OCI-LY7 (cell line): ENCODE measurements at regions of chr9 and their contacts with region 1.

Region 1: GRCh38 chr9:110152704-110153374 is 55.1 kb downstream of the C9orf152 start:
- DNase-seq: peak; percentile 80
- H3K4me3 ChIP-seq: peak overlapping the region; percentile 79
- H3K27ac ChIP-seq: peak overlapping the region; percentile 97
- H3K4me1 ChIP-seq: peaks cover 85% of the 10 kb centered on the region
- CTCF ChIP-seq: peak; percentile 94

Region 2: GRCh38 chr9:109846776-109847175 is 306.1 kb before region 1 on chr9:
- CTCF ChIA-PET with region 1: no interaction called
- POLR2A ChIA-PET with region 1: no interaction called
- intact Hi-C with region 1: no loop called
- DNase-seq: no peak
- H3K4me3 ChIP-seq: no peak overlapping the region
- H3K27ac ChIP-seq: no peak overlapping the region
- H3K4me1 ChIP-seq: no peaks in the 10 kb centered on the region
- CTCF ChIP-seq: no peak

Region 3: GRCh38 chr9:109918339-109919163 is 234.3 kb before region 1 on chr9:
- CTCF ChIA-PET with region 1: interaction called, 4 read pairs
- POLR2A ChIA-PET with region 1: interaction called, 215 read pairs
- intact Hi-C with region 1: loop called (anchors 1 kb)
- DNase-seq: peak; percentile 96
- H3K4me3 ChIP-seq: peak overlapping the region; percentile 49
- H3K27ac ChIP-seq: peak overlapping the region; percentile 98
- H3K4me1 ChIP-seq: peaks cover 97% of the 10 kb centered on the region
- CTCF ChIP-seq: no peak

Region 4: DNA sequence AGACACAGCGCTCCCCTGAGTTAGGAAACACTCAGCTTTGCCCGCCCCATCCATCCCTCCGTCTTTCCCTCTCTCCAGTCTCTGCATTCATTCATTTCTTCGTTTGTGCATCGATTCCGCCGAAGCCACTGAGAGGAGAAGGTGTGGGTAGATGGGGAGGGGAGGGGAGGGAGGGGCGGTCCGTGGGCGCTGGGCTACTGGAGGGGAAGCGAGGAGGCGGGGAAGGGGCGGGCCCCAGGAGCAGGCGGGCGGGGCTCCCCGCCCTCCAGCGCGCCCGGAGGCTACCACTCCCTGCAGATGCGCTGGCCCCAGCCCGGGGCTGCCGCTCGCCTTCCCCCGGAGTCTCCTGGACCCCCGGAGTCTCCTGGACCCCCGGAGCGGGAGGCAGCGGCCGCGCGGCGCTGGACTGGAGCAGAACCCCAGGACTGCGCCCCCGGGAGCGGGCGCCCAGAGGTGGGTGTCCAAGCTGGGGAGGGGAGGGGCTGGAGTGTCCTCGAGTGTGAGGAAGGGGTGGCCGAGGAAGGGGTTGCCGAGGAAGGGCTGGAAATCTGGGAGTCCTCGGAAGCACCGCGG is 104.3 kb before region 1 on chr9:
- CTCF ChIA-PET with region 1: no interaction called
- POLR2A ChIA-PET with region 1: interaction called, 21 read pairs
- intact Hi-C with region 1: loop called (anchors 1 kb)
- DNase-seq: peak; percentile 88
- H3K4me3 ChIP-seq: peak overlapping the region; percentile 86
- H3K27ac ChIP-seq: peak overlapping the region; percentile 53
- H3K4me1 ChIP-seq: peaks cover 47% of the 10 kb centered on the region
- CTCF ChIP-seq: no peak

Region 5: DNA sequence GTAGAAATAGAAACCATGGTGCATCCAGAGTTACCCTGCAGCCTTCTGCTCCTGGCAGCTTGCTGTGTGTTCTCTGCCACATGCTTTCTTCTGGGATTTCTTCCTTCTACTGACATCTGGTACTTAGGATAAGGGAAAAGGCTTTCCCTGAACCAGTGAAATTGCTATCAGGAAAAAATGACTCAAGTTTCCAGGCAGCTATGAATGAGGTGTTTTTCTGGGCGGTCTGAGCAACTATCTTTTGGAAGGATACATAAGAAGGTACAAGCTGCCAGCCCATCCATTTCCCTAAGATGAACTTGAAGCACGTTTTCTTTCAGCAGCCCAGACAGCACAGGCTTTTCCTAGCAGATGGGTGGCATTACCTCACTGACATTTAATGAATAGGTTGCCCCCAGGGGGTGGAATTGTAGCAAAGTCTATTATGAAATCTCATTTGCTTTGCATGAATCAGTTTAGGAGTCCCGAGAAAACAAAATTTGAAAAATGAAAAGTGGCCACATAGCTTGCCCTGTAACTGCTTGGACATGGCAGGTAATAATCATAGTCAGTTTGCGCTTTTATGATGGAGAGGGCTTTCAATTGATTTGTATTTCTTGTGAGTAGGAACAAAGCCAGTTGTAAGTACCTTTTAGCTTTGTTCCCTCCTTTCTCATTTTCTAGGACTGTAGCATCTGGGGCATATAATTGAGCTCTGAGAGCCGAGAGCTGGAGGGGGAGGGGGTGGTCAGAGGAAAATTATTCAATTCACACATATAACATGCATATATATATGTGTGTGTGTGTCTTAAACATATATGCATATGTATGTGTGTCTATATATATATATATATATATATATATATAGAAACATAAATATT is 53.4 kb before region 1 on chr9:
- CTCF ChIA-PET with region 1: interaction called, 9 read pairs
- POLR2A ChIA-PET with region 1: interaction called, 31 read pairs
- intact Hi-C with region 1: loop called (anchors 2 kb)
- DNase-seq: peak; percentile 47
- H3K4me3 ChIP-seq: peak overlapping the region; percentile 4
- H3K27ac ChIP-seq: peak overlapping the region; percentile 79
- H3K4me1 ChIP-seq: peaks cover 67% of the 10 kb centered on the region
- CTCF ChIP-seq: peak; percentile 47

Region 6: DNA sequence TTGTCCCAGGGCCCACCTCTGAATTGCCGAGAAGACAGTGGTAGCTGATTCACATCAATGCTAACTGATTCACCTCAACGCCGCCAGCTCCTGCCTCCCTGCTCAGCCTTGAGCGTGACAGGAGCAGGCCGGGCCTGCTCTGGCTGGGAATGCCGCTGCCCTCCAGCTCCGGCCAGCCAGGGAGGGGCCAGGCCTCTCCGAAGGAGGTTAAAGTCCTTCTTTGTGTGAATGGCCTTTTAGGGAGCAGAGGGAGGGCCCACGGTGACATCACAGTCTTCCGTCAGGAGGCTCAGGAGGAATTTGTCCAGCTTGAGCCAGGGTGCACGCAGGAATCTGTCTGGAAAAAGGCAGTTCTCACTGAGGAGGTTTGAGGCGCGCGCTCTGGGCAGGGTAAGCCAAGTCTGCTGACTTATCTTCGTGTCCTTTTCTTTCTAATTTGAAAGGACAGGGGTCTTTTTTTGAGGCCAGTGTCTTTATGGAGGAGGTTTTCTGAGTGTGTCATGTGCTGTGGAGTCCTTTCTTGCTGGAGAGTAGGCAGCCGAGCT is 27.6 kb before region 1 on chr9:
- CTCF ChIA-PET with region 1: interaction called, 5 read pairs
- POLR2A ChIA-PET with region 1: interaction called, 133 read pairs
- intact Hi-C with region 1: no loop called
- DNase-seq: no peak
- H3K4me3 ChIP-seq: peak overlapping the region; percentile 57
- H3K27ac ChIP-seq: peak overlapping the region; percentile 95
- H3K4me1 ChIP-seq: peaks cover 100% of the 10 kb centered on the region
- CTCF ChIP-seq: no peak

Region 7: GRCh38 chr9:110410961-110411360 is 258.1 kb after region 1 on chr9:
- CTCF ChIA-PET with region 1: no interaction called
- POLR2A ChIA-PET with region 1: no interaction called
- intact Hi-C with region 1: no loop called
- DNase-seq: no peak
- H3K4me3 ChIP-seq: no peak overlapping the region
- H3K27ac ChIP-seq: no peak overlapping the region
- H3K4me1 ChIP-seq: no peaks in the 10 kb centered on the region
- CTCF ChIP-seq: no peak

Region 8: GRCh38 chr9:111198936-111199335 is 1046.1 kb after region 1 on chr9:
- CTCF ChIA-PET with region 1: no interaction called
- POLR2A ChIA-PET with region 1: no interaction called
- intact Hi-C with region 1: no loop called
- DNase-seq: no peak
- H3K4me3 ChIP-seq: no peak overlapping the region
- H3K27ac ChIP-seq: no peak overlapping the region
- H3K4me1 ChIP-seq: no peaks in the 10 kb centered on the region
- CTCF ChIP-seq: no peak